ENCODE measurements at regions of chr20 and their contacts with region 1.

Region 1: DNA sequence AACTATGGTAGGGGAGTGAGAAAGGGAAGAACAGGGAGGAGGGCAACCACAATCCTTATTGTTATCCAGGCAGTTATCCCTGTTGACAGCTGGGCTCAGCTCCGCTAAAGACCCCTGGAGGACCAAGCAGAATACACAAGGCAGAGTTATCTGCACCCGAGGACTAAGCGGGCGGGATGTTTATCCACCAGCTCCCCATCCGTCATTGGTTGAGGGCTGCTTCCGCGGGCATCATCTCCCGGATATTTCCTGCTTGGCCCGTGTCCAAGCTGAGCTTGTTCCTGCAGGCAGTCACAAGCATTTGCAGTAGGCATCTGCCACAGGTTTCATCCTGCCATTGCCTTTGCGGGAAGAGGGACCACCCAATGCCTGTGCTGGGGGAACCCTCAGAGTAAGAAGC is 102.1 kb downstream of the DLGAP4 start:
- DNase-seq: peak; percentile 60
- H3K4me3 ChIP-seq: no peak overlapping the region
- H3K27ac ChIP-seq: no peak overlapping the region
- H3K4me1 ChIP-seq: peaks cover 5% of the 10 kb centered on the region
- H3K27me3 ChIP-seq: no peaks in the 10 kb centered on the region
- CTCF ChIP-seq: no peak

Region 2: GRCh38 chr20:34842143-34842542 is 1566.1 kb before region 1 on chr20:
- CTCF ChIA-PET with region 1: no interaction called
- POLR2A ChIA-PET with region 1: interaction called, 10 read pairs
- intact Hi-C with region 1: no loop called
- DNase-seq: no peak
- H3K4me3 ChIP-seq: no peak overlapping the region
- H3K27ac ChIP-seq: no peak overlapping the region
- H3K4me1 ChIP-seq: no peaks in the 10 kb centered on the region
- H3K27me3 ChIP-seq: no peaks in the 10 kb centered on the region
- CTCF ChIP-seq: no peak

Region 3: DNA sequence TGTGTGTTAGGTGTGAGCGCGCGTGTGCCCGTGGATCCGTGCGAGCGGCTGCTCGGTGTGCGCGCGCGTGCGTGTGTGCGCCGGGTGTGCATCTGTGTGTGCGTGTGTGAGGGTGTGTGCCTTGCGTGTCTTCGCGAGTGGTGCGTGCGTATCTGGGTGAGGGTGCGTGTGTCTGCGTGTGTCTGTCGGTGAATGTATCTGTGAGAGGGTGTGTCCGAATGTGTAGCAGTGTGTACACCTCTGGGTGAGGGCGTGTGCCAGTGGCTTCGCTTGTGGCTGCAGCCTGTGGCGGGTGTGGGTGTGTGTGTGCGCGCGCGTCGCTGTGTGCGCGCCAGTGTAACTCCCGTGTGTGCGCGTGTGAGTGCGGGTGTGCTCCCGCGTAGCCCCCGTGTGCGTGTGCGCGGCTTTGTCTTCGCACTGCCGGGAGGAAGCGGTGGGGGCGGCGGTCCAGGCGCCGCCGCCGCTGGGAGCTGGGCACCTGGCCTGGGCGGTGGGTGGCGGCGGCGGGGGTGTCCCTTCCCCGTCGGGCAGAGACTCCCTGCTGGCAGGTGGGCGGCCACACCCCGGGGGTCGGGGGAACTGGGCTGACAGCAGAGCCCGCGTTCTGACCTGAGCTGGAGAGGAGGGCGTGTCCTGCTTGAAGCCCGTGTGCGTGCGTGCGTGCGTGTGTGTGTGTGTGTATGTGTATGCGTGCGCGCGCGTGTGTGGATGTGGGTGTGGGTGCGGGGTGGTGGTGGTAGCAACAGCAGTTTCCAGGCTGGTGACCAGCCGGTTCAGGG is 315.0 kb before region 1 on chr20:
- CTCF ChIA-PET with region 1: no interaction called
- POLR2A ChIA-PET with region 1: no interaction called
- intact Hi-C with region 1: no loop called
- DNase-seq: peak; percentile 45
- H3K4me3 ChIP-seq: peak overlapping the region; percentile 51
- H3K27ac ChIP-seq: no peak overlapping the region
- H3K4me1 ChIP-seq: no peaks in the 10 kb centered on the region
- H3K27me3 ChIP-seq: peaks cover 47% of the 10 kb centered on the region
- CTCF ChIP-seq: no peak